Endothelial cell of umbilical vein (primary cell): ENCODE measurements at regions of chr9 and their contacts with region 1.

Region 1: GRCh38 chr9:81885602-81886001 is 42.6 kb upstream of the SPATA31D4 start:
- DNase-seq: no peak
- H3K4me3 ChIP-seq: no peak overlapping the region
- H3K27ac ChIP-seq: no peak overlapping the region
- H3K4me1 ChIP-seq: no peaks in the 10 kb centered on the region
- H3K27me3 ChIP-seq: no peaks in the 10 kb centered on the region
- CTCF ChIP-seq: no peak
- POLR2A ChIP-seq: no peak

Region 2: GRCh38 chr9:81984928-81985327 is 99.3 kb after region 1 on chr9:
- CTCF ChIA-PET with region 1: no interaction called
- POLR2A ChIA-PET with region 1: no interaction called
- dilution Hi-C with region 1: no loop called
- intact Hi-C with region 1: loop called (anchors 10 kb)
- DNase-seq: no peak
- H3K4me3 ChIP-seq: no peak overlapping the region
- H3K27ac ChIP-seq: no peak overlapping the region
- H3K4me1 ChIP-seq: no peaks in the 10 kb centered on the region
- H3K27me3 ChIP-seq: no peaks in the 10 kb centered on the region
- CTCF ChIP-seq: no peak
- POLR2A ChIP-seq: no peak